ENCODE measurements at regions of chr9 and their contacts with region 1.

Region 1: GRCh38 chr9:120944434-120944843 is 17.8 kb upstream of the TRAF1 start:
- DNase-seq: no peak
- H3K4me3 ChIP-seq: no peak overlapping the region
- CTCF ChIP-seq: no peak
- POLR2A ChIP-seq: no peak

Region 2: DNA sequence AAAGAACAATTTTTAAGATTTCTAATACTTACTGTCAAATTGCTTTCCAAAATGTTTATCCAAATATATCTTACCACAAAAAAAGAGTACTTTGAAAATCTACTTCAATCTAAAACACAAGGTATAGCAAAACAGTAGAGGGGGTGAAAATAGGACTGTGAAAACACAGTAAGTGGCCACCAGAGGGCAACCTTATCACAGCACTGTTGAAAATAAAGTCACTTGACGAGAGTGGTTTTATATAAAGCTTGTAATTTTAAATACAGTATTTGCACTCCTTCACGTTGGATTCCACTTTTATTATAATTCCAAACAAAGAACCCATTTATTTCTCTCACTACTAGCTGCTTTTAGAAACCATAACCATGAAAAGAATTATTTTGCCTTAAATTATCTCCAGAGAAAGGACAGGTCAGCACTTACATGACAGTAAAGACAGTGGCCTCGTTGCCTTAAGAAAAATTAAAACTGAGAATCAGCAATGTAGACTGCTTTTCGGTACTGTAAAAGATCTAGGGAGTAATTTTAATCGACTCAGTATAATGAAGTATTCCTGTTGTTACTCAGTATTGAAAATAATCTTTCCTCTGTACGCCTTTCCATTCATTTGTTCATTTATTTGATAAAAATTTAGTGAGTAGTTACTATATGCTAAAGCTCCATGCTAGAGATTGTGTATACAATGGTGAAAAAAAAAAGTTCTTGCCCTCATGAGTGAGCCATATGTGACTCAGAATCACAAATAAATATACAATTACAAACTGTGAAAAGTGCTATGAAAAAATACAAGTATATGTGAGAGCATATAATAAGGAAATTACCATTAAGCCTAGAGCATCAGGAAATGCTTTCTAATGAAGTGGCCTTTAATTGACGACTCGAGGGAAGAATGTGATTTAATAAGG is 324.4 kb before region 1 on chr9:
- intact Hi-C with region 1: loop called (anchors 10 kb)
- DNase-seq: peak in 1 of 2 donors; percentile 56
- H3K4me3 ChIP-seq: no peak overlapping the region
- CTCF ChIP-seq: peak in 1 of 3 donors; percentile 33
- POLR2A ChIP-seq: no peak

Region 3: DNA sequence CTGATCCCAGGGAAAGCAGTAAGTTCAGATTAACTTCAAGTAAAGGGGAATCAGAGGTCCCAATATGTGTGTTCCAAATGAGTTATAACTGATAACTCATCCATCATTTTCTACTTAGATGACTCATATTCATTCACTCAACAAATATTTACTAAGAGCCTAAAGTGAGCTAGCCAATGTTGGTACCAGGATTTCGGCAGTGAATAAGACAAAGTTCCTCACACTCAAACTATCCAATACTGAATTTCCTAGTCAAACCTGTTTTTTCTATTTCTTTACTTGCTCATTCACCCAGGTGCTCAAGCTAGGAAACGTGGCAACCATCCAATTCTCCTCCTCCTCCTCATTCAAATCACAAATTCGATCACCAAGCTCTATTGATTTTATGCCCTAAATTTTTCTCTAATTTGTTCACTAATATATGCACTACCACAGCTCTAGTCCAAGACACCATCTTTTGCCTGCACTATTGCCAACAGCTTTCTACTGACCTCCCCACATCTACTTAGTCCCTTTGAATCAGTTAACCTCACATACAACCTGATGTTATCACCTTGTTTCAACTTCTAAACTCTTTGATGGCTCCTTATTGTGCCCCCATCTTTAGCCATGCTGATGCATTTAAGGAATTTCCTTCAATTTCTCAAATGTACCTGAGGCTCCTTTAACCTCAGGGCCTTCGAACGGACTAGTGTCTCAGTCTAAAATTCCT is 176.8 kb before region 1 on chr9:
- intact Hi-C with region 1: loop called (anchors 10 kb)
- DNase-seq: no peak
- H3K4me3 ChIP-seq: no peak overlapping the region
- CTCF ChIP-seq: no peak
- POLR2A ChIP-seq: no peak

Region 4: GRCh38 chr9:120807607-120808379 is 136.6 kb before region 1 on chr9:
- intact Hi-C with region 1: no loop called
- DNase-seq: no peak
- H3K4me3 ChIP-seq: no peak overlapping the region
- CTCF ChIP-seq: no peak
- POLR2A ChIP-seq: no peak

Measured in lower leg skin (tissue), 4 donors.